Activated CD4-positive, alpha-beta memory T cell treated with anti-CD3 and anti-CD28 coated beads for 36 hours (primary cell): ENCODE measurements at regions of chr5 and their contacts with region 1.

Region 1: DNA sequence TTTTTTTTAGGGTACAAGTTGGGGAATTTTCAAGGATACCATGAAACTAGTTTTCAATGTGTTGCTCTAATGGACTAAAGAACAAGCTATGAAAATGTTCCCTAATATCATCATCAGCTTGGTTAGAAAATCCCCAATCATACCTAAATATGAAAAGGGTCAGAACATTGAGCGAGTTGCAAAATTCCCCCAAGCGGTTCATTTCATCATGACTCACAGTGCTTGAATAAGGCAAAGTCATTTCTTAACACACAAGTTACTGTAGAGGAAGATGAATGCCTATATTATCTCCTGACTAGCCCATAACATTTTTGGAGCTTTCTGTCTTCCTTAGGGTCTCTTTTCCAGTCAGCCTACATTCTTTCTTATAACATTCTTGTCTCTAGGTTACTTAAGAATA is 62.7 kb downstream of the ST8SIA4 start:
- DNase-seq: peak; percentile 52
- H3K4me3 Mint-ChIP-seq: no peak overlapping the region
- H3K27ac Mint-ChIP-seq: peak overlapping the region; percentile 86
- H3K4me1 Mint-ChIP-seq: peaks cover 67% of the 10 kb centered on the region
- H3K27me3 Mint-ChIP-seq: no peaks in the 10 kb centered on the region

Region 2: DNA sequence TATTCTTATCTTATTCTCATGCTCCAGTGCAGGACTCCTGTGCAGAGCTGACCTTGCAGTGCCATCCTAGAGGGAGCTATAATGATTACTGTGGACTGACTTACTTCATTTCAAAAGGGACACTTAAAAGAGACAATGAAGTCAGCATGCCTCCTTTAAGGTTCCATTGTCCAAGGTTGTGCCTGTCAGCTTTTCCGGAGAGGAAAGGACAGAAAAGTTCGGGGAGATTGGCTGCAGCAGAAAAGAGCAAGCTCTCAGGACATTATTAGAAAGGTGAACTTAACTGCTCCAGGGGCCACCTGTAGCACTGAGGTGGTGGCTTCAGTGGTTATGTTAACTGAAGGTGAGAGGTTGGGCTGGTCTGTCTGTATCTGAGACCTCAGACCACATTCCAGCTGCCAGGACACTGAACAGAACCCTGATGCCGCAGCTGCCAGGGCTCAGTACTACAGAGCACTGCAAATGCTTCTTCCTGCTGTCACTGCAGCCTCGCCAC is 50.2 kb before region 1 on chr5:
- CTCF ChIA-PET with region 1: no interaction called
- POLR2A ChIA-PET with region 1: no interaction called
- intact Hi-C with region 1: no loop called
- DNase-seq: no peak
- H3K4me3 Mint-ChIP-seq: no peak overlapping the region
- H3K27ac Mint-ChIP-seq: no peak overlapping the region
- H3K4me1 Mint-ChIP-seq: peaks cover 5% of the 10 kb centered on the region
- H3K27me3 Mint-ChIP-seq: no peaks in the 10 kb centered on the region

Region 3: DNA sequence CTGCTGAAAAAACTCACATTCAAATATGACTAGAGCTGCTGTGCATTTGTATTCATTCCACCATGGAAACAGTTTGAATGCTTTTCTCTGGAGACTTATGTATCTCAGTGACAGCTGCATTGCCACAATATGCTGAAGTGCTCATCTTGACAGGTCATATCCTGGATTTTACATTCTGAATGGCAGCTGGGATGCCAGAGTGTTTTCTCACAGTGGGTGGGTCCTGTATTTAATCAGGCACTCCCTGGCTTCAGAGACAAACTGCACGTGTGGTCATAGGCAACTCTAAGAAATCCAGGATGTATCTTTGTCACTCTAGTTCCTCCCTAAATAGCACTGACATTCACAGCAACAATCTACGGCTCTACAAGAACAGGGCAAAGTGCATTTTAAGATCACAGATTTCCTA is 12.9 kb before region 1 on chr5:
- CTCF ChIA-PET with region 1: interaction called, 3 read pairs
- POLR2A ChIA-PET with region 1: interaction called, 8 read pairs
- intact Hi-C with region 1: loop called (anchors 1 kb)
- DNase-seq: peak; percentile 23
- H3K4me3 Mint-ChIP-seq: no peak overlapping the region
- H3K27ac Mint-ChIP-seq: peak overlapping the region; percentile 79
- H3K4me1 Mint-ChIP-seq: peaks cover 43% of the 10 kb centered on the region
- H3K27me3 Mint-ChIP-seq: no peaks in the 10 kb centered on the region

Region 4: GRCh38 chr5:100852988-100853449 is 12.6 kb after region 1 on chr5:
- CTCF ChIA-PET with region 1: interaction called, 8 read pairs
- POLR2A ChIA-PET with region 1: interaction called, 4 read pairs
- intact Hi-C with region 1: loop called (anchors 1 kb)
- DNase-seq: no peak
- H3K4me3 Mint-ChIP-seq: peak overlapping the region; percentile 69
- H3K27ac Mint-ChIP-seq: peak overlapping the region; percentile 95
- H3K4me1 Mint-ChIP-seq: peaks cover 40% of the 10 kb centered on the region
- H3K27me3 Mint-ChIP-seq: no peaks in the 10 kb centered on the region

Region 5: DNA sequence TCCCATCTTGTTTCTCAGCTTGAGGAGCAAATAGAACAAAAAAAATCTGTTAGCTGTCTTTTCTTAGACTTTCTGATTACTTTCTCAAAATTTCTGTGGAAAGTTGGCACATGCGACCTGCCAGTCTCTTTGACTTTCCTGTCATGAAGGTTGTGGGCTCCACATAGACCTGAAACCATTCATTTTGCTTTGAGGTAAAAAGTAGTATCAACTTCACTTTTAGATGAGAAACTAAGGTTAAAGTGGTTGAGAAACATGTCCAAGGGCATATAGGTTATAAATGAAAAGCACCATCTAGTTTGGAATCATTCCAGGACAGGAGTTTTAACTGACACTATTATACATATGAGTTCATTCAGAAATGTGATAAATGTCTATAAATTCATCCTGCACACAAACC is 20.0 kb after region 1 on chr5:
- CTCF ChIA-PET with region 1: interaction called, 5 read pairs
- POLR2A ChIA-PET with region 1: interaction called, 4 read pairs
- intact Hi-C with region 1: loop called (anchors 1 kb)
- DNase-seq: peak; percentile 26
- H3K4me3 Mint-ChIP-seq: no peak overlapping the region
- H3K27ac Mint-ChIP-seq: peak overlapping the region; percentile 80
- H3K4me1 Mint-ChIP-seq: peaks cover 65% of the 10 kb centered on the region
- H3K27me3 Mint-ChIP-seq: no peaks in the 10 kb centered on the region

Region 6: DNA sequence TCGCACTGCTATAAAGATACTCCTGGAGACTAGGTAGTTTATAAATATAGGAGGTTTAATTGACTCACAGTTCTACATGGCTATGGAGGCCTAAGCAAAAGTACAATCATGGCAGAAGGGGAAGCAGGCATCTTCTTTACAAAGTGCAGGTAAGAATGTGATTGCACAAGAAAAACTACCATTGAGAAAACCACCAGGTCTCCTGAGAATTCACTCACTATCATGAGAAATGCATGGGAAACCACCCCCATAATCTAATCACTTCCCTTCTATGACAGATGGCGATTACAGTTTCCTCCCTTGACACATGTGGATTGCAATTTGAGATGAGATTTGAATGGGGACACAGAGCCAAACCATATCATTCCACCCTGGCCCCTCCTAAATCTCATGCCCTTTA is 183.9 kb after region 1 on chr5:
- CTCF ChIA-PET with region 1: no interaction called
- POLR2A ChIA-PET with region 1: no interaction called
- intact Hi-C with region 1: no loop called
- DNase-seq: no peak
- H3K4me3 Mint-ChIP-seq: no peak overlapping the region
- H3K27ac Mint-ChIP-seq: no peak overlapping the region
- H3K4me1 Mint-ChIP-seq: no peaks in the 10 kb centered on the region
- H3K27me3 Mint-ChIP-seq: no peaks in the 10 kb centered on the region

Region 7: GRCh38 chr5:101253096-101253495 is 412.7 kb after region 1 on chr5:
- CTCF ChIA-PET with region 1: no interaction called
- POLR2A ChIA-PET with region 1: no interaction called
- intact Hi-C with region 1: no loop called
- DNase-seq: no peak
- H3K4me3 Mint-ChIP-seq: no peak overlapping the region
- H3K27ac Mint-ChIP-seq: no peak overlapping the region
- H3K4me1 Mint-ChIP-seq: no peaks in the 10 kb centered on the region
- H3K27me3 Mint-ChIP-seq: peaks cover 2% of the 10 kb centered on the region